H1 (cell line): ENCODE measurements at regions of chr2 and their contacts with region 1.

Region 1: GRCh38 chr2:11022604-11023273 is 111.0 kb downstream of the KCNF1 start:
- DNase-seq: peak in 1 of 2 experiments; percentile 40
- H3K4me3 ChIP-seq: no peak overlapping the region
- H3K27ac ChIP-seq: no peak overlapping the region
- H3K4me1 ChIP-seq: peaks cover 0 to 3% (median 1%) of the 10 kb centered on the region in 4 experiments; a peak in 3 of 7 replicates
- H3K27me3 ChIP-seq: no peaks in the 10 kb centered on the region
- CTCF ChIP-seq: no peak
- EP300 ChIP-seq: no peak
- POLR2A ChIP-seq: no peak
- RAD21 ChIP-seq: no peak

Region 2: GRCh38 chr2:11007331-11008264 is 15.1 kb before region 1 on chr2:
- CTCF ChIA-PET with region 1: interaction called, 11 read pairs
- POLR2A ChIA-PET with region 1: interaction called, 5 read pairs
- DNase-seq: no peak
- H3K4me3 ChIP-seq: no peak overlapping the region
- H3K27ac ChIP-seq: no peak overlapping the region
- H3K4me1 ChIP-seq: peaks cover 0 to 4% (median 0%) of the 10 kb centered on the region in 4 experiments; a peak in 1 of 7 replicates
- H3K27me3 ChIP-seq: no peaks in the 10 kb centered on the region
- CTCF ChIP-seq: no peak
- EP300 ChIP-seq: no peak
- POLR2A ChIP-seq: no peak
- RAD21 ChIP-seq: no peak

Region 3: GRCh38 chr2:11103984-11104793 is 81.5 kb after region 1 on chr2:
- CTCF ChIA-PET with region 1: no interaction called
- POLR2A ChIA-PET with region 1: no interaction called
- DNase-seq: no peak
- H3K4me3 ChIP-seq: no peak overlapping the region
- H3K27ac ChIP-seq: no peak overlapping the region
- H3K4me1 ChIP-seq: no peaks in the 10 kb centered on the region
- H3K27me3 ChIP-seq: no peaks in the 10 kb centered on the region
- CTCF ChIP-seq: no peak
- EP300 ChIP-seq: no peak
- POLR2A ChIP-seq: no peak
- RAD21 ChIP-seq: no peak